ENCODE measurements at regions of chr13 and their contacts with region 1.

Region 1: DNA sequence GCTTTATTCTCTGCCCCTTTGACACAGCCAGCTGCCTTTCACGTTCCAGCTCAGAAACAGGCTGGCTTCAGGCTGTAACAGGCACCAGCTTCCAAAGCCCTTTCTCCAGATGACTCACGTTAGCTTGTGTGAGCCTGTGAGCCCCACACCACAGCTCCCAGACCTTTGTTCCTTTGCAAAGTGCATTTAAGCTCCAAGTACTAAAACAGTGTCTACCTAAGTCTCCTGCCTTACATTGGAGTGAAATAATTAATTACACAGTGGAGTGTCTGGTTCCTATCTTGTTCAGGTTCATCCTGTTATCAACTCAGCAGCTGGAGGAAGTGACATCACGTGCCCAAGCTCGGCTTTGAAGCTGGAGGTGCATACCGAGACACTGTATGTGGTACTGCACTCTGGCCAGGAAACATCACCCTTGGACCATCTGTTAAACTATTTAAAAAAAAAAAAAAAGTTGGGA is 475.8 kb downstream of the FOXO1 start:
- DNase-seq: peak; percentile 88
- H3K4me3 Mint-ChIP-seq: peak overlapping the region; percentile 11
- H3K27ac Mint-ChIP-seq: peak overlapping the region; percentile 99
- H3K4me1 Mint-ChIP-seq: peaks cover 71% of the 10 kb centered on the region
- H3K27me3 Mint-ChIP-seq: no peaks in the 10 kb centered on the region

Region 2: DNA sequence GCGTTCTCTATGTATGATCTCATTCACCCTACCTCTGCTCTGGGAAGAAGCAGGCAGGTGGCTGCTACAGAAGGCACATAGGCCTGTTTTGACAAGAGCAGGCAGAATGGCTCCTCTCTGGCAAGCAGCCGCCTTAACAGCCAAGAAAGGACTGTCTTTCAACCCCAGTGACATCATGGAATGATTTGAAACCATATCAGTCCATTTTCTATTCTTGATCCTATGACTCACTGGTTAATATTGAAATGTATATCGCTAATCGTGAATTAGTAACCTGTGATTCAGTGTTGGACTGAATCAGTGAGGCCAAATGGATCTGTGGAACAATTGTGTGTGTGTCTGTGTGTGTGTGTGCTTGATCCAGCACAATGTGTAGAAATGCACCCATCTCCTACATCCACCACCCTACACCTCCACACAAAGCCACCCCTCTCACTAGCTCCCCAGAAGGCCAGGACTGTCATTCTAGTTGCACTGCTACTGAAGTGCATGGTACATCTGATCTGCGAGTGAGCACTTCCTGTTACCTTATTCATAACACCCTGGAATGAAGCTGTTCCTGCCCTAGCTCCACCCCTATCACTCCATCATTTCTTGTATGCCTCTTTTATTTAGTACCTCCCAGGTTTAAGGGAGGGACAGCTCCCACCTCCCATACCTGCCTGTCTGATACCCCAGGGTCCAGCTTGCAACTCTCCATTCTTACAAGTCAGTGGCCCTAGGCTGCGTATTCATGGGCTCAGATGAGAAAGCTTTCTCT is 15.8 kb after region 1 on chr13:
- CTCF ChIA-PET with region 1: interaction called, 12 read pairs
- DNase-seq: peak; percentile 56
- H3K4me3 Mint-ChIP-seq: peak overlapping the region; percentile 27
- H3K27ac Mint-ChIP-seq: peak overlapping the region; percentile 98
- H3K4me1 Mint-ChIP-seq: peaks cover 51% of the 10 kb centered on the region
- H3K27me3 Mint-ChIP-seq: no peaks in the 10 kb centered on the region

Measured in activated naive CD4-positive, alpha-beta T cell treated with anti-CD3 and anti-CD28 coated beads, Interleukin-2, amount 10 ng/mL, durations not matched to agents 7 days and 5 days (primary cell).